ENCODE measurements at regions of chr6 and their contacts with region 1.

Region 1: DNA sequence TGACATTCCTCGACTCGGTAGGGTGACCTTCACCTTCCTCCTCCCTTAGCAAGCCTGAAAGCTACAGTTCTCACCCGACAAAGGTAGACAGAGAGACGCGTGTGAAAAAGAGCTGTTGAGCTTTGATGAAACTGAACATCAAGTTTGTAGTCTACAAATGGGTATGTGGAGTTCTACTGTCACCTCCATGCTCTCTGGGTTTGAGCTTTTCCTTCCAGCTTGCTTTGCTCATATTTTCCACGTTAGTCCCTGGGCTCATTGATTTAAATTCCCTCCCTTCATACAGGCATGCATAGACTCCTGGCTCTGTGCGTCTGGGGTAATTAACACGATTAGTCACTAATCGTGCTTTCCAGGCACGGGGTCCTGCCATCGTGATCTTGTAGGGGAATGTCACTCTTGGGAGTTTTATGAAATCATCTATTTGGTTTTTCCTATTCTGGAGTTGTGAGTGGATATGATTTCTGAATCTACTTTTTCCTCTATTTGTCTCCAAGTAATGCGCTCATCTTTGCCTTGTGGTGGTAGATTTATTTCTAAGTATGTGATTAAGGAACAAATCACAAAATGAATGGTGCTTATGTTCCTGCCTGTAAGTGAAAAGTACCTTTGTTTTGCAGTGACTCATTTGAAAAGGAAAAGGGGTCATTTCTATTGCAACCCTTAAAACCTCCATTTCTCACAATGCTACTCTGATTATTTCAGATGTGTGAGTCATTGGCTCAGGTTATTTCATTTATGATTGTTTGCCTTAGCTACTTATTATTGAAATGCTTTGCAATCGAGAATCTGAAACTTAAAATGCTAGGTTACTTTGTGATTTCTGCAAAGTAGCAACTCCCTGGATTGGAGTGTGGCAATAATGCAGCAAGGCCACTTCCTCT is 154.6 kb downstream of the ZDHHC14 start:
- DNase-seq: peak; percentile 44
- ATAC-seq: peak; percentile 34
- H3K4me3 ChIP-seq: no peak overlapping the region
- H3K4me3 Mint-ChIP-seq: no peak overlapping the region
- H3K27ac ChIP-seq: peak overlapping the region in 1 of 2 donors; percentile 62
- H3K27ac Mint-ChIP-seq: peak overlapping the region; percentile 18
- H3K4me1 ChIP-seq: peaks cover 50 to 59% of the 10 kb centered on the region in 2 donors
- H3K4me1 Mint-ChIP-seq: peaks cover 61% of the 10 kb centered on the region
- H3K27me3 ChIP-seq: no peaks in the 10 kb centered on the region
- H3K27me3 Mint-ChIP-seq: no peaks in the 10 kb centered on the region
- CTCF ChIP-seq: no peak

Region 2: DNA sequence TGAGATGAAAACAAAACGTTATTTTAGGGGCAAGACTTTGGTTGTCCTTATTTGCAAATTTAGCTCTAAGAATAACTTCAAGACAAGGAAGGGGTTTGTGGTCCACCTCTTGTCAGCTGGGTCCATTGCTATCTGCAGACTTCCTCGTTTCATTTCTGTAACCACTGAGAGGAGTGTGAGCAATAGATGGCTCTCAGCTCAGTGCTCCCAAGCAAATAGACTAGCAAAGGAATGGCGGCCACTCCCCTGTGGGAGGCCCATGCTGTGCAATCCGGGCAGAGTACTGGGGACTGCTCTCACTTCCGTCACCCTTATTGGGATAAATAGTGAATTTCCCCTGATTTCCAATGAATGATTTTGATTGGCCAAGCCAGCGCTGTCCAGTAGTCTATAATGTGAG is 22.0 kb after region 1 on chr6:
- CTCF ChIA-PET with region 1: interaction called, 4 read pairs
- POLR2A ChIA-PET with region 1: interaction called, 3 read pairs
- intact Hi-C with region 1: loop called (anchors 2 kb)
- DNase-seq: peak; percentile 55
- ATAC-seq: peak; percentile 18
- H3K4me3 ChIP-seq: peak overlapping the region in 3 of 5 experiments; percentile 5 to 37 (median 15)
- H3K4me3 Mint-ChIP-seq: peak overlapping the region; percentile 72
- H3K27ac ChIP-seq: peak overlapping the region; percentile 57 to 70
- H3K27ac Mint-ChIP-seq: peak overlapping the region; percentile 95
- H3K4me1 ChIP-seq: peaks cover 71 to 95% of the 10 kb centered on the region in 2 donors
- H3K4me1 Mint-ChIP-seq: peaks cover 75% of the 10 kb centered on the region
- H3K27me3 ChIP-seq: no peaks in the 10 kb centered on the region
- H3K27me3 Mint-ChIP-seq: no peaks in the 10 kb centered on the region
- CTCF ChIP-seq: no peak

Measured in B cell (primary cell).